ENCODE measurements at regions of chr1 and their contacts with region 1.

Region 1: DNA sequence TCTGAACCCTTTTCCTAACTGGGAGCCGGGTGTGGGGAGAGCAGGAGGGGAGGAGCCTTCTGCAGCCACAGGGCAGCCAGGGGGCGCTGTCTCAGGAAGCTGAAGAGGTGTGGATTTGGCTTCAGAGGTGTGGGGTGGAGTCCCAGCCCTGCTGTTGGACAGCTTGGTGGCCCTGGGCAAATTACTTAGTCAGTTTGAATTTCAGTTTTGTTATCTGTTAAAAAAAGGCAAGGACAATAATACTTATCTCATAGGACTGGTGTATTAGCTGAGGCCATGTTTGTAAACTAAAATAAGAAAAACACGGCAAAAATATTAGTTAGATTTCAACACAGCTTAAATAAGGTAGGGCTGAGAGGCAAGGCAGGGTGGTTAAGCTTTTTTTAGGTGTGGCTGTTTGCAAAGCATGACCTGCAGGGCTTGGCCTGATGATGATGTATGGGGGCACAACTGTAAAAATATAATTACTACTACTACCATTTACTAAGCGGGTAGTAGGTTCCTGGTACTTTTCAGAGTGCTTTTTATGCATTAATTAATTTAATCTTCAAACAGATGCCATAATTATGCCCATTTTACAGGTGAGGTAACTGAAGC is 111.8 kb downstream of the PLXNA2 start:
- DNase-seq: no peak
- H3K4me3 ChIP-seq: no peak overlapping the region
- H3K27ac ChIP-seq: no peak overlapping the region
- H3K4me1 ChIP-seq: peaks cover 38% of the 10 kb centered on the region
- H3K27me3 ChIP-seq: no peaks in the 10 kb centered on the region
- CTCF ChIP-seq: peak; percentile 45 to 68 (median 66)
- POLR2A ChIP-seq: no peak

Region 2: GRCh38 chr1:209219791-209220524 is 1087.6 kb after region 1 on chr1:
- intact Hi-C with region 1: loop called (anchors 10 kb)
- DNase-seq: no peak
- H3K4me3 ChIP-seq: peak overlapping the region; percentile 2 to 22
- H3K27ac ChIP-seq: peak overlapping the region; percentile 77
- H3K4me1 ChIP-seq: peaks cover 11% of the 10 kb centered on the region
- H3K27me3 ChIP-seq: no peaks in the 10 kb centered on the region
- CTCF ChIP-seq: no peak
- POLR2A ChIP-seq: no peak